ENCODE measurements at regions of chr14 and their contacts with region 1.

Region 1: GRCh38 chr14:77799863-77800730 is at the start of gene ADCK1:
- DNase-seq: peak; percentile 80 to 92 (median 85)
- H3K4me3 ChIP-seq: peak within 1 kb of the TSS; percentile 66 to 96 (median 84)
- H3K27ac ChIP-seq: peak within 1 kb of the TSS; percentile 46 to 79
- H3K4me1 ChIP-seq: peaks cover 0 to 8% (median 5%) of the 10 kb centered on the region in 4 experiments
- H3K27me3 ChIP-seq: no peaks in the 10 kb centered on the region

Region 2: DNA sequence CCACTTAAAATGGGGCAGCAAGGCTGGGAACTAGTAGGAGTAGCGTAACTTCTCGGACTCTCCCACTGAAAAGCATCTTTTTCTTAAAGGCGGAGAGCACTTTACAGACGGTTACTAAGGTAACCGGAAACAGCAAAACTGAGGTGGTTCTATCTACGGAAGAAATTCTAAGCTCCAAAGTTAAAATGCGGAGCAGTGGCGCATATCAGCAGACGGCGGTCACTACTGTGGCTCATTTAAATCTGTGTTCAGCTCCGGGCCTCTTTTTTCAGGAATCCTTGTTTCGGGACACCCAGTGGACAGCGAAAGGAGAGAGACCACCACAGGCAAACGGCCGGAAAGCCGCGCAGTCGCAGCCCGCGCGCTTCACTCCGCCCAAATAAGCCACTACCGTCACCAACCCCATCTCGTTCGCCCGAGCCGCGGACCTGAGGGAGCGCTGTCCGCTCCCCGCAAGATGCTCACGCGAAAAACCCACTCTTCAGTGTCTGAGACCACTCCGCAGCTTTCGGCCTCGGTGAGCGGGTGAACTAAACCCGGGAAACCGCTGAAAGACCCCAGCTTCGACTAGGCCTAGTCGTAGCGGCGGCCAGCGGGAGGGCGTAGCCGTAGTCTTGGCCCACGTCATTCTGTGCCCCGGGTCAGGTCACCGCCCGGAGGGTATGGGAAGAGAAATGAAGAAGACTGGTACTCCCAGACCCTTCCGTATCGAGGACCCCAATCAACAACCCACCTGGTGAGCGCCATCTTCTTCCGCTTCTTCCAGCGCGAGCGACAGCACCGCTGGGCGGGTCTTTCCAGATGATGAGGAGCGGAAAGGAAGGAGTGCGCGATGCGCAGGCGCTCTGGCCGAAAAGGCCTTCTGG is 39.5 kb before region 1 on chr14 and contains the start of gene SNW1:
- CTCF ChIA-PET with region 1: interaction called, 9 read pairs
- POLR2A ChIA-PET with region 1: interaction called, 10 read pairs
- DNase-seq: peak; percentile 94 to 97 (median 97)
- H3K4me3 ChIP-seq: peak within 1 kb of the TSS; percentile 90 to 100 (median 99)
- H3K27ac ChIP-seq: peak within 1 kb of the TSS; percentile 98 to 99
- H3K4me1 ChIP-seq: peaks cover 13 to 23% (median 18%) of the 10 kb centered on the region in 4 experiments
- H3K27me3 ChIP-seq: no peaks in the 10 kb centered on the region